ENCODE measurements at regions of chr4 and their contacts with region 1.

Region 1: DNA sequence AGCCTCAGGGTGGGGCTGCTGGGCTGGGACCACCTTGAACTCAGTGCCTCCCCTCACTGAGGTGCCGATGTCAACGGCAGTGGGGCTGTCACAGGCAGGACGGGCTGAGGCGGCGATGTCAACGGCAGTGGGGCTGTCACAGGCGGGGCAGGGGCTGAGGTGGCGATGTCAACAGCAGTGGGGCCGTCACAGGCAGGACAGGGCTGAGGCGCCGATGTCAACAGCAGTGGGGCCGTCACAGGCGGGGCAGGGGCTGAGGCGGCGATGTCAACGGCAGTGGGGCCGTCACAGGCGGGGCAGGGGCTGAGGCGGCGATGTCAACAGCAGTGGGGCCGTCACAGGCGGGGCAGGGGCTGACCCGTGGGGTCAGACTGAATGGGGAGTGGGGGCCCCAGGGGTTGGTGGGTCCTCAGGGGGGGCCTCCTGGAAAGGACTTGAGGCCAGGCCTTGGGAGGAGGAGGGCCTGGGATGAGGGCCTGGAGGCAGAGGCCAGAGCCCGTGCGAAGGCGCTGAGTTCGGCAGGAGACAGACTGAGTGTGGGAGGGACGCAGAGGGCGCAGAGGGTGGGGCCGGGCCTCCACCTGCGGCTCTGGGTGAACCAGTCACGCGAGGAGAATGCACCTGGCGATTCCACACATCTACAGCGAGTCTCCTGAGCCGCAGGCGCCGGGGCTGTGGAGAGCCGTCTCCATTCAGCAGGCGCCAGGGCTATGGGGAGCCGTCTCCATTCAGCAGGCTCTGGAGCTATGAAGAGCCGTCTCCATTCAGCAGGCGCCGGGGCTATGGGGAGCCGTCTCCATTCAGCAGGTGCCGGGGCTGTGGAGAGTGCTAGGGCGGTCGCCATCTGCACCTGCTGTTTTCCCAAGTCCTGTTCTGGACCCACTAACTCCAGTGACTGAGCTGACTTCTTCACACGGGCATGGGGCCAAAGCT is 22.9 kb downstream of the ATP5ME start:
- DNase-seq: no peak
- H3K4me3 ChIP-seq: peak overlapping the region in 2 of 3 donors; percentile 33 to 51
- H3K27ac ChIP-seq: no peak overlapping the region
- H3K4me1 ChIP-seq: no peaks in the 10 kb centered on the region
- H3K27me3 ChIP-seq: peaks cover 0 to 63% of the 10 kb centered on the region in 2 donors
- CTCF ChIP-seq: no peak
- POLR2A ChIP-seq: no peak

Region 2: DNA sequence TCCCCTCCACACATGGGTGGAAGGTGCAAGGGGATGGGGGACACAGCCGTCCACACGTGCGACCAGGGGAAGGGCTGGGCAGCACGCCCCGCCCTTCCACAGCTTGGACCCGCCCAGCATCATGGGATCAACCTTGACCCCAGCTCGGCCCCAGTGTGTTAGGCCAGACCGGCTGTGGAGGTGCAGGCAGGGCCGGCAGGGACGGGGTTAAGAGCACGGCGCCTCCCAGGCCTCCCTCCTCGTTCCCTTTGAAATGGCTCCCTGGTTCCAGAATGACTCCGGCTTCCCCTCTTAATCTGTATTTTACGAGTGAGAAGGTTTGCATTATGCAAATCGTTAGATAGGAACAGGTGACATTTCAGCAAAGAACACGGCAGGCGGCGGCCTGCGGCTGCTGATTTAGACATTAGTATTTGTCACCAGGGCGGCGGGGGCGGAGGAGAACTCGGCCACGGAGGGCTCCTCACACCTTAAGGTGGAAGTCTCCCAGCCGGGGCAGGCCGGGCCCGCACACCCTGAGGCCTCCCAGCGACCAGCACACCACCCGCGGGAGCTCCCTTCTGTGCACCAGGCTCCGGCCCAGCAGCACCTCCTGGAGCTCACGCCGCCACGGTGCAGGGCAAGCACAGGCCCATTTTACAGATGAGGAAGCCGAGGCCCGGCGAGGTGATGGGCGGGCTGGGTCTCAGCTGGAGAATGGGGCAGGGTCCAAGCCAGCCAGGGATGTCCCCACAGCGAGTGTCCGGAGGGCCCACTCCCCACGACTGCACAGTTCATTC is 916.8 kb after region 1 on chr4:
- intact Hi-C with region 1: loop called (anchors 10 kb)
- DNase-seq: no peak
- H3K4me3 ChIP-seq: no peak overlapping the region
- H3K27ac ChIP-seq: no peak overlapping the region
- H3K4me1 ChIP-seq: no peaks in the 10 kb centered on the region
- H3K27me3 ChIP-seq: peaks cover 13 to 62% of the 10 kb centered on the region in 2 donors
- CTCF ChIP-seq: no peak
- POLR2A ChIP-seq: no peak

Measured in breast epithelium (tissue), 4 donors.